ENCODE measurements at regions of chrX and their contacts with region 1.

Region 1: DNA sequence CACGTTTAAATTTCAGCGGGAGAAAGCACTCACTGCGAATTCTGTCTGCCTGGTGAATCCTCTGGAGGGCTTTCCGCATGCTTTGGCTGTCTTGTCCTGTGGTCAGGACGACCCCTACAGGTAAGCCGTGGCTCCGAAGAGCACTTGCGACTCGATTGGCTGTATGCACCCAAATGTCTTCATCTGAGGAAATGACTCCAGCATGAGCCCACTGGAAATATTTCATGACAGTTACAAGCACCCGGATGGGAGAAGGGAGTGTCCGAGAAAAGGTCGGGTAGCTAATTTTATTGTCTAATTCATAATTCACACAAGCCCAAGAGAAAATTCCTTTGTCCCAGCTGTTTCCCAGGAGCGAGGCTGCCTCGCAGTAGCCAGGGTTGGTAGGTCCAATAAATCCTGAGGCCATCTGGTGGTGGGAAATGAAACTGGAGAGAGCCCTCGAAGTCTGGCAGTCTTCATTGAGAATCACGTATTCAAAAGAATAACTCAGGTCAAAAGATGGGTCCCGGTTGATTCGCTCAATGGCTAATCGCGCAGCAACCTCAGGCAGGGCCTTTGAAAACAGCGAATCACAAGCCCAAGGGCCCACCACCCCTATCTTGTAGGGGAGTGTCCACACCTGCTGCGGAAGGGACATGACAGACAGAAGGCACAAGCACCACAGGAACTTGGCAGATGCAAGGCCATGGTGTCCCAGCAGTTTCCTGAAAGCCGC is 6.6 kb downstream of the GUCY2F start:
- DNase-seq: peak; percentile 26
- ATAC-seq: peak; percentile 57 to 78

Region 2: DNA sequence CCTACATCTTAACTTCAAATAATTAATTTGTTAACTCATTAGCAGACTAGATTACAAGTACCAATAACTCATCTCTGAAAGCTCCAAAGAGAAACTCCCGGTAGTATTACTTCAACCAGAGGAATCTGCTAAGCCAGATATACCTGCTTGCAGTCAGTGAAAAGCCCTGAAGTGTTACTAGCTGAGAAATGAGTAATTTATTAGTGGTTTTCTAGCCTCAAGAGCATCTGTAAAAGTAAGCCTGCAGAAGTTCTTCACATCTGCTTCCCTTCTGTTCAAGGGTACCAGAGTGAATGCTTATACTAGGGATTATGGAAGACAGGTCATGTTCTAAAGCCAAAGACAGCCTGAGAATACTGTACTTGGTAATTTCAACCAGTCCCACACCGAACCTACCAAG is 773.7 kb before region 1 on chrX:
- intact Hi-C with region 1: loop called in 1 of 2 experiments (anchors 5 kb)
- DNase-seq: no peak
- ATAC-seq: no peak